ENCODE measurements at regions of chr1 and their contacts with region 1.

Region 1: DNA sequence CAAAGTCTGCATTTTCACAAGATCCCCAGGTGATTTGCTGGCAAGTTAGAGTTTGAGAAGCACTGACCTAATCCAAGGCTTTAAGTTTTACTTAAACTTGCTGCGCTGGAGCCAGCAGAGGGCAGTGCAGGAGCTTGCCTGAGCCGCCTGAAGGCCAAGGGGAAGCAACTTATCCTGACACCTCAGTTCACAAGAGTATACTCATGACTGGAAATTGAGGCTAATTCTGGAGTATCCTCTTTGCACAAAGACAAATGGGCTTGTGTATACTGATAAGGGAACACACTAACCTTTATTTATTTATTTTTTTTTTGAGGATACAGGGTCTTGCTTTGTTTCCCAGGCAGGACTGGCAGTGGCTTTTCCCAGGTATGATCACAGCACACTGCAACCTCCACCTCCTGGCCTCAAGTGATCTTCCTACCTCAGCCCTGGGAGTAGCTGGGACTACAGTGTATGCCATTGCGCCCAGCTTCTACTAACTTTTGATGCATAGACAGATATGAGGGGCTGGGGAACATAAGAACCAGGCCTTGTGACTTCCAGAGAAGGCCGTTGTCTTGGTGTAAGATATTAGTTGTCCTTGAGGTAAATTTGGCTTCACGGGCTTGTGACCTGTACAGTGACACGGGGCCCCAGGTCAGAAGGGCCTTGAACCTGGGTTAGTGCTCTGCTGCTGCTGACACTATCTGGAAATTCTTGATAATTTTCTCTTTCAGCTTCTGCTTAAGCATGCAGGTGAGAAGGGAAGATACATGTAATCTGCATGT is 29.0 kb upstream of the SLAMF1 start:
- DNase-seq: peak; percentile 83
- ATAC-seq: peak; percentile 81
- H3K4me3 ChIP-seq: no peak overlapping the region
- H3K4me3 Mint-ChIP-seq: peak overlapping the region; percentile 43
- H3K27ac ChIP-seq: peak overlapping the region in 1 of 2 donors; percentile 61
- H3K27ac Mint-ChIP-seq: peak overlapping the region; percentile 81
- H3K4me1 ChIP-seq: peaks cover 48 to 52% of the 10 kb centered on the region in 2 donors
- H3K4me1 Mint-ChIP-seq: peaks cover 16% of the 10 kb centered on the region
- H3K27me3 ChIP-seq: no peaks in the 10 kb centered on the region
- H3K27me3 Mint-ChIP-seq: no peaks in the 10 kb centered on the region
- CTCF ChIP-seq: peak; percentile 86

Region 2: DNA sequence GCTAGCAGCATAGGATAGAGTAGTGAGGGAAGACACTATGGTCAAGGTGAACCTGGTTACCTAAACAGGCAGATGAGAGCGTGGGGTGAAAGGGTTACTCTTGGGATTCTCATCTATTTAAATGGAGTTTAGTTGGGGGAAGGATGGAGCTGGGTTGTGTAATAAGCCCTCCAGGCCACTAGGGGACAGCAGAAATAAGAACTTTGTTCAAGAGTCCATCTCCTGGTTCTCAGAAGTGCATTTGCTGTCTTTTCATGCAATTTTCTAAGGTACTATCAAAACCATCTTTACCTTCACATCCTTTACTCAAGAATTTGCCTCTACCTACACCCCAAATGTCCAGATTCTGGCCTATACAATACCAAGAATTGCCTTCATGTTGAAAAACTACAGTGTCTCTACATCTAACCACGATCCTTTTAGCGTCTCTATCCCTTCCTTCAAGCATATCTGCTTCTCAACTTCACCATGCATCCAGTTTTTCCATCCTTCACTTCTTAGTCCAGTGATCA is 57.0 kb before region 1 on chr1:
- CTCF ChIA-PET with region 1: interaction called, 76 read pairs
- POLR2A ChIA-PET with region 1: no interaction called
- intact Hi-C with region 1: loop called (anchors 2 kb)
- DNase-seq: peak; percentile 58
- ATAC-seq: peak; percentile 42
- H3K4me3 ChIP-seq: no peak overlapping the region
- H3K4me3 Mint-ChIP-seq: no peak overlapping the region
- H3K27ac ChIP-seq: peak overlapping the region in 1 of 2 donors; percentile 2
- H3K27ac Mint-ChIP-seq: peak overlapping the region; percentile 8
- H3K4me1 ChIP-seq: peaks cover 35 to 43% of the 10 kb centered on the region in 2 donors
- H3K4me1 Mint-ChIP-seq: peaks cover 59% of the 10 kb centered on the region
- H3K27me3 ChIP-seq: no peaks in the 10 kb centered on the region
- H3K27me3 Mint-ChIP-seq: no peaks in the 10 kb centered on the region
- CTCF ChIP-seq: peak; percentile 79

Region 3: GRCh38 chr1:160637821-160638539 is 37.8 kb before region 1 on chr1:
- CTCF ChIA-PET with region 1: interaction called, 25 read pairs
- POLR2A ChIA-PET with region 1: no interaction called
- intact Hi-C with region 1: no loop called
- DNase-seq: peak; percentile 79
- ATAC-seq: peak; percentile 49
- H3K4me3 ChIP-seq: peak overlapping the region in 2 of 5 experiments; percentile 17 to 40
- H3K4me3 Mint-ChIP-seq: peak overlapping the region; percentile 65
- H3K27ac ChIP-seq: peak overlapping the region; percentile 72 to 83
- H3K27ac Mint-ChIP-seq: peak overlapping the region; percentile 88
- H3K4me1 ChIP-seq: peaks cover 70 to 82% of the 10 kb centered on the region in 2 donors
- H3K4me1 Mint-ChIP-seq: peaks cover 82% of the 10 kb centered on the region
- H3K27me3 ChIP-seq: no peaks in the 10 kb centered on the region
- H3K27me3 Mint-ChIP-seq: no peaks in the 10 kb centered on the region
- CTCF ChIP-seq: no peak

Region 4: DNA sequence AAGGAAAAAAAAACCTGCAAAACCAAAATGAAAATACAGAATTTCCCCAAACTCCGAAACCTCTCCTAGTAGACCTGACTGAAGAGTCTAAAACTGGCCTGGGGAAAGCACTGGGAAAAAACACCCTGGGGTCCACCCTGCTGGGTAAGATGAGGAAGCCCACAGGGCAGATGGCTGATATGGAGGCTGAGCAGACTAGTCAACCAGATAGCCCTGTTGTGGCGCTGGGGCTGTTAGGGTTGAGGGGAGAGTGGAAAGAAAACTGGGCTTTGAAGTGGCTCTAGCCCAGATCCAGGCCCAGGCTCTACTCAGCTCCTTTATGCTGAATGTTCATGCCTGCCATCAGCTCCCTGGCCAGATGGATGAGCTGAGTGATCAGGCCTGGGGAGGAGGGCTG is 22.2 kb before region 1 on chr1:
- CTCF ChIA-PET with region 1: interaction called, 35 read pairs
- POLR2A ChIA-PET with region 1: interaction called, 7 read pairs
- intact Hi-C with region 1: loop called (anchors 2 kb)
- DNase-seq: peak; percentile 58
- ATAC-seq: peak; percentile 76
- H3K4me3 ChIP-seq: peak overlapping the region in 2 of 5 experiments; percentile 25 to 27
- H3K4me3 Mint-ChIP-seq: peak overlapping the region; percentile 84
- H3K27ac ChIP-seq: peak overlapping the region; percentile 63 to 82
- H3K27ac Mint-ChIP-seq: peak overlapping the region; percentile 96
- H3K4me1 ChIP-seq: peaks cover 56 to 80% of the 10 kb centered on the region in 2 donors
- H3K4me1 Mint-ChIP-seq: peaks cover 87% of the 10 kb centered on the region
- H3K27me3 ChIP-seq: no peaks in the 10 kb centered on the region
- H3K27me3 Mint-ChIP-seq: no peaks in the 10 kb centered on the region
- CTCF ChIP-seq: no peak

Region 5: GRCh38 chr1:160711602-160712311 is 35.9 kb after region 1 on chr1 and contains the start of gene CD48:
- CTCF ChIA-PET with region 1: interaction called, 62 read pairs
- POLR2A ChIA-PET with region 1: no interaction called
- intact Hi-C with region 1: loop called (anchors 1 kb)
- DNase-seq: peak; percentile 80
- ATAC-seq: peak; percentile 54
- H3K4me3 ChIP-seq: peak within 1 kb of the TSS; percentile 87 to 100 (median 98)
- H3K4me3 Mint-ChIP-seq: no peak within 1 kb of the TSS
- H3K27ac ChIP-seq: peak within 1 kb of the TSS; percentile 89 to 95
- H3K27ac Mint-ChIP-seq: no peak within 1 kb of the TSS
- H3K4me1 ChIP-seq: peaks cover 62 to 64% of the 10 kb centered on the region in 2 donors
- H3K4me1 Mint-ChIP-seq: peaks cover 26% of the 10 kb centered on the region
- H3K27me3 ChIP-seq: no peaks in the 10 kb centered on the region
- H3K27me3 Mint-ChIP-seq: no peaks in the 10 kb centered on the region
- CTCF ChIP-seq: no peak
- total RNA-seq, gene CD48: 252 and 255 TPM in 2 replicates

Region 6: GRCh38 chr1:160768295-160768657 is 92.5 kb after region 1 on chr1:
- CTCF ChIA-PET with region 1: interaction called, 50 read pairs
- POLR2A ChIA-PET with region 1: no interaction called
- intact Hi-C with region 1: loop called (anchors 1 kb)
- DNase-seq: peak; percentile 87
- ATAC-seq: peak; percentile 98
- H3K4me3 ChIP-seq: peak overlapping the region in 4 of 5 experiments; percentile 20 to 64 (median 43)
- H3K4me3 Mint-ChIP-seq: peak overlapping the region; percentile 83
- H3K27ac ChIP-seq: peak overlapping the region; percentile 39 to 68
- H3K27ac Mint-ChIP-seq: peak overlapping the region; percentile 85
- H3K4me1 ChIP-seq: peaks cover 11 to 18% of the 10 kb centered on the region in 2 donors
- H3K4me1 Mint-ChIP-seq: peaks cover 29% of the 10 kb centered on the region
- H3K27me3 ChIP-seq: no peaks in the 10 kb centered on the region
- H3K27me3 Mint-ChIP-seq: no peaks in the 10 kb centered on the region
- CTCF ChIP-seq: peak; percentile 74

Region 7: DNA sequence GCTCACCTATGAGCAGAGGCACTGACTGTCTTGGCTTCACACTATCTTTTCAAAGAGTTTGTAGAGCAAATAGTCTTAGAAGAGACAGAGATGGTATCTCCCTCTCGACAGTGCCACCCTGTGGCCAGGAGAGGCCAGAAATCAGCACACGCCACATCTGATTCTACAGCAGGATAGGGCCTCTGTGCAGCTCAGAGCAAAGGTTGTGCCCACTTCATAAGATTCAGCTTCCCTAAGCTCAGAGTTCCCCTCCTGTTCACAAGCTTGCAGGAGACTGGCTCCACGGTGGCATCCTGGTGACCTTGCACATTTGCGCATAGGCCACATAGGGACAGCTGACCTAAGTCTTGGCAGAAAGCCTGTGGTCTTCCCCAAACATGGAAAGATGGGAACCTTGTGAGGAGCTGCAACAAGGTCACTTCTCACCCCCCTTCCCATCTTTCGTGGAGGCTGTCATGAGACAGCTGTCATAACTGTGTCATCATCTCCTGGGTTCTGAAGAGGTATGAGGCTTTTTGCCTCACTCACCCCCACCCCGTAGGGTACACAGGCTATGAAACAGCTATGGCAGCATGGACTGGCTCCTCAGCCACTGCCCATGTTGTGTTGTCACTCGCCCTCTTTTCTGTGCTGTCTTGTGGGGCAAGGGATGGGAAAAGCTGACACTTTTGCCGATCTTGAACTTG is 275.8 kb after region 1 on chr1:
- CTCF ChIA-PET with region 1: interaction called, 123 read pairs
- POLR2A ChIA-PET with region 1: no interaction called
- intact Hi-C with region 1: loop called (anchors 1 kb)
- DNase-seq: peak; percentile 81
- ATAC-seq: peak; percentile 81
- H3K4me3 ChIP-seq: no peak overlapping the region
- H3K4me3 Mint-ChIP-seq: no peak overlapping the region
- H3K27ac ChIP-seq: no peak overlapping the region
- H3K27ac Mint-ChIP-seq: no peak overlapping the region
- H3K4me1 ChIP-seq: peaks cover 0 to 4% of the 10 kb centered on the region in 2 donors
- H3K4me1 Mint-ChIP-seq: peaks cover 9% of the 10 kb centered on the region
- H3K27me3 ChIP-seq: no peaks in the 10 kb centered on the region
- H3K27me3 Mint-ChIP-seq: no peaks in the 10 kb centered on the region
- CTCF ChIP-seq: peak; percentile 85